ENCODE measurements at regions of chr12 and their contacts with region 1.

Region 1: DNA sequence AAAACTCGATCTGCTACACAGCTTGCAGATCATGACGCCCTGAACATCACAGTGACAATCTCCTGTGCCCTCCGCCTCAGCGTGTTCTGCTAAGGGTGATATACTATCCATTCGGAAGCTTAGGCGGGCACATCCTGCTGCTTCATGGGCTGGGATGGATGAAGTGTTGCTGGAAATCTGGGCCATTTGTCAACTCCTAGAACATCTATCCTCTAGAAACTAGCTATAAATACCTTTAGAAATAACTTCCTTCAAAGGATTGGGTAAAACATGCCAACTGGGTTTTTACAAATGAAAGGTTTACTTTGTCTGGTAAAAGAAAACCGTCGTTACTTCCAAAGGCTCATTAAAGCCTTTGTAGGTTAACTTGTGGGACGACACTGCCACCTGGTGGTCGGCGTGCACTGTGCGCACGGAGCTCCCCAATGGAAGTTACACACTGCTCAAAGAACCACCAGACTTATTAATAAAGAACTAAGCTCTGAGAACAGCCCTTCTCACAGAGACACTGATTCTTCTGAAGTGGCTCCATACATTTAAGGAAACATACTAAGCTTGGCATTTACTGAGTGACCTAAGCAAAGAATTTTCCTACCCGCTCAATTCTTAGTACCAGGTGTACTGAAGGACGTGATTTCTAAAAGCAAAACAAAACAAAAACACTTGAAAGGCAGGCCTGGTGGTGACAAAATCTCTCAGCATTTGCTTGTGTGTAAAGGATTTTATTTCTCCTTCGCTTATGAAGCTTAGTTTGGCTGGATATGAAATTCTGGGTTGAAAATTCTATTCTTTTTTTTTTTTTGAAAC is 21.6 kb upstream of the CACNA2D4 start:
- DNase-seq: peak; percentile 53 to 95
- H3K4me3 ChIP-seq: no peak overlapping the region
- H3K27ac ChIP-seq: no peak overlapping the region
- H3K4me1 ChIP-seq: no peaks in the 10 kb centered on the region; a peak in 1 of 7 replicates
- H3K27me3 ChIP-seq: no peaks in the 10 kb centered on the region
- CTCF ChIP-seq: peak; percentile 82 to 92 (median 85)
- EP300 ChIP-seq: no peak
- POLR2A ChIP-seq: no peak
- RAD21 ChIP-seq: peak; percentile 92 to 95

Region 2: DNA sequence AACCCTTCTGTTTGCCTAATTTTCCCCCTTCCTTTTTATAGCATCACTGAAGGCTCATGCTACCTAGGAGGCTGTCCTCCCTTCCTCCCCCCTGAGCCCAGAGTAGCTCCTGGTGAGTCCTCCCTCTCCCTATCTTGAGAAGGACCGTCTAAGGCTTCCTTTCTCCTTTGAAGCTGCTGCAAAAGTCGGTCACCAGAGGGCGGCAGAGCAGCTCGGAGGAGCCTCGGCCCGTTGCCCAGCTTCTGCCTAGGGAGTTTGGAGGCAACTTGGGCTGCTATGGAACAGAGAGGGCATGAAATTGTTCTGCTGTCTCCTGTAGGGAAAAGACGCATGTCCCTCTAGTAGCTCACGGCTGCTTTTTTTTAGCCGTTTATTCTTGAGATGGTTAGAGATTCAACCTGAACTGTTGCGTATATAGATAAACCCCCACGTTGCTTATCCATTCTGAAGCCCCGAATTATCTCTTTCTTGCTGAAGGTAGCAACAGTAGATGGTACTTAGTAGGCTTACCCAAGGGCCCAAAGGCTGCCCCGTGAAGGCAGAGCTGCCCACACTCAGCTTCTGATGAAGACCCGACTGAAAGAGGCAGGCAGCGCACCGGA is 305.3 kb before region 1 on chr12:
- CTCF ChIA-PET with region 1: interaction called, 24 read pairs
- POLR2A ChIA-PET with region 1: no interaction called
- DNase-seq: peak; percentile 56 to 88
- H3K4me3 ChIP-seq: no peak overlapping the region
- H3K27ac ChIP-seq: no peak overlapping the region
- H3K4me1 ChIP-seq: peaks cover 2 to 18% (median 15%) of the 10 kb centered on the region in 4 experiments
- H3K27me3 ChIP-seq: peaks cover 31 to 61% (median 47%) of the 10 kb centered on the region in 4 experiments
- CTCF ChIP-seq: peak; percentile 82 to 89 (median 86)
- EP300 ChIP-seq: no peak
- POLR2A ChIP-seq: no peak
- RAD21 ChIP-seq: peak; percentile 79 to 88

Region 3: DNA sequence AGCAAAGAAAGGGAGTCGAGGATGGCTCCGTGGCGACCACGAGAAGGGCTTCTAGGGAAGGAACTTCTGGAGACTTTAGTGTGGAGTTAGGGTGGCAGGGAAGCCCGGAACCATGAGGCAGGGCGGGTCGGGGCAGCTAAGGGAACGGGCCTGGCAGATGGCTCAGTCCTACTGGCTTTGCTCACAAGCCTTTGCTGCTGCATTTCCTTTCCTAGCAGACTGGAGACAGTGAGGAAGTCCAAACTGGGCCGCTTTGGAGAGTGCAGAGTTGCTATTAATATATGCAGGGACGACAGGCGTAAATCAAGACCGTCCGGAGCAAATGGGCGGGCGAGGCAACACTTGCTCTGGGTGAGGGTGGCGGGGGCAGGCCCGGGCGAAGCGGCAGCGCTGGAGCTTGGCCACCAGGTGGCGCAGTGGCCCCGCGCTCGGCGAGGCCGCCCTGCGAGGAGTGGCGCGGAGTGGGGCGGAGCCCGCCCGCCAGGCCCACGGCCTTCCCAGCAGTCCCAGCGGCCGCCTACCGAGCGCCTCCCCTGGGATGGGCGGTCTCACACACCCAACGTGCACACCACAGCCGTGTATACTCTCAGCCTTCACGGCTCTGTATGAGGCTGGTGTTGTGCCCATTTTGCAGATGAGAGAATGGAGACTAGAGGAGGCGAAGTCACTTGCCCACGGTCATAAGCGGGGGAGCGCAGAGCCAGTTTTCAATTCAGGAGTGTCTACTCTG is 144.1 kb before region 1 on chr12:
- CTCF ChIA-PET with region 1: interaction called, 188 read pairs
- POLR2A ChIA-PET with region 1: interaction called, 3 read pairs
- DNase-seq: peak; percentile 50 to 94
- H3K4me3 ChIP-seq: peak overlapping the region; percentile 31 to 70 (median 44); a peak in 7 of 8 replicates
- H3K27ac ChIP-seq: no peak overlapping the region
- H3K4me1 ChIP-seq: peaks cover 3 to 12% (median 4%) of the 10 kb centered on the region in 4 experiments; a peak in 6 of 7 replicates
- H3K27me3 ChIP-seq: peaks cover 1 to 11% (median 7%) of the 10 kb centered on the region in 4 experiments; a peak in 6 of 7 replicates
- CTCF ChIP-seq: peak in 2 of 3 experiments; percentile 89 to 92; a peak in 3 of 4 replicates
- EP300 ChIP-seq: no peak
- POLR2A ChIP-seq: no peak
- RAD21 ChIP-seq: peak; percentile 85 to 94

Region 4: GRCh38 chr12:1815814-1816729 is 123.9 kb before region 1 on chr12:
- CTCF ChIA-PET with region 1: interaction called, 18 read pairs
- POLR2A ChIA-PET with region 1: no interaction called
- DNase-seq: no peak
- H3K4me3 ChIP-seq: no peak overlapping the region
- H3K27ac ChIP-seq: no peak overlapping the region
- H3K4me1 ChIP-seq: peaks cover 0 to 12% (median 3%) of the 10 kb centered on the region in 4 experiments; a peak in 5 of 7 replicates
- H3K27me3 ChIP-seq: peaks cover 8 to 22% (median 21%) of the 10 kb centered on the region in 4 experiments
- CTCF ChIP-seq: no peak
- EP300 ChIP-seq: no peak
- POLR2A ChIP-seq: no peak
- RAD21 ChIP-seq: no peak

Region 5: GRCh38 chr12:1837541-1838204 is 102.3 kb before region 1 on chr12:
- CTCF ChIA-PET with region 1: interaction called, 20 read pairs
- POLR2A ChIA-PET with region 1: no interaction called
- DNase-seq: no peak
- H3K4me3 ChIP-seq: no peak overlapping the region
- H3K27ac ChIP-seq: no peak overlapping the region
- H3K4me1 ChIP-seq: peaks cover 0 to 10% (median under 1%) of the 10 kb centered on the region in 4 experiments; a peak in 3 of 7 replicates
- H3K27me3 ChIP-seq: no peaks in the 10 kb centered on the region
- CTCF ChIP-seq: no peak
- EP300 ChIP-seq: no peak
- POLR2A ChIP-seq: no peak
- RAD21 ChIP-seq: no peak

Region 6: DNA sequence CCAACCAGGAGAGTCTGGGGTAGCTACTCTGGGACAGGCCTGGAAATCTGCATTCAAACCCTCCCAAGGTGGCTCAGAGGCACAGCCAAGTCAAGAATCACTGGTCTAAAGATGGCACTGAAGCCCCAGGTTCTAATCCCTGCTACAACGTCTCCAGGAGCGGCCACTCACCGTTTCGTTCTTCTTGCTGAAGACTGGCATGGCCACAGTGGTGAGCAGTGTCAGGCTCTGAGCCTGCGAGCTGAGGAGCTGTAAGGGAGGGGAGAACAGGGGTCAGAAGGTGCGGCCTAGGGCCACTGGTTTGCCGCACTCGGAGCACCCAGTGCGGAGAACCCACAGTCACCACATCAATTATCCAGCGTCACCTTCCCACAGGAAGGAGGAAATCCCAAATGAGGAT is 60.4 kb before region 1 on chr12:
- CTCF ChIA-PET with region 1: interaction called, 10 read pairs
- POLR2A ChIA-PET with region 1: no interaction called
- DNase-seq: peak in 1 of 2 experiments; percentile 27
- H3K4me3 ChIP-seq: no peak overlapping the region
- H3K27ac ChIP-seq: no peak overlapping the region
- H3K4me1 ChIP-seq: no peaks in the 10 kb centered on the region
- H3K27me3 ChIP-seq: no peaks in the 10 kb centered on the region
- CTCF ChIP-seq: no peak
- EP300 ChIP-seq: no peak
- POLR2A ChIP-seq: no peak
- RAD21 ChIP-seq: no peak

Region 7: GRCh38 chr12:1927751-1928351 is 12.2 kb before region 1 on chr12:
- CTCF ChIA-PET with region 1: interaction called, 19 read pairs
- POLR2A ChIA-PET with region 1: no interaction called
- DNase-seq: peak in 1 of 2 experiments; percentile 40
- H3K4me3 ChIP-seq: no peak overlapping the region
- H3K27ac ChIP-seq: no peak overlapping the region
- H3K4me1 ChIP-seq: peaks cover 0 to 2% (median 0%) of the 10 kb centered on the region in 4 experiments; a peak in 1 of 7 replicates
- H3K27me3 ChIP-seq: no peaks in the 10 kb centered on the region; a peak in 1 of 7 replicates
- CTCF ChIP-seq: no peak
- EP300 ChIP-seq: no peak
- POLR2A ChIP-seq: no peak
- RAD21 ChIP-seq: no peak

Measured in H1 (cell line).